Panc1 (cell line): ENCODE measurements at regions of chr9 and their contacts with region 1.

Region 1: DNA sequence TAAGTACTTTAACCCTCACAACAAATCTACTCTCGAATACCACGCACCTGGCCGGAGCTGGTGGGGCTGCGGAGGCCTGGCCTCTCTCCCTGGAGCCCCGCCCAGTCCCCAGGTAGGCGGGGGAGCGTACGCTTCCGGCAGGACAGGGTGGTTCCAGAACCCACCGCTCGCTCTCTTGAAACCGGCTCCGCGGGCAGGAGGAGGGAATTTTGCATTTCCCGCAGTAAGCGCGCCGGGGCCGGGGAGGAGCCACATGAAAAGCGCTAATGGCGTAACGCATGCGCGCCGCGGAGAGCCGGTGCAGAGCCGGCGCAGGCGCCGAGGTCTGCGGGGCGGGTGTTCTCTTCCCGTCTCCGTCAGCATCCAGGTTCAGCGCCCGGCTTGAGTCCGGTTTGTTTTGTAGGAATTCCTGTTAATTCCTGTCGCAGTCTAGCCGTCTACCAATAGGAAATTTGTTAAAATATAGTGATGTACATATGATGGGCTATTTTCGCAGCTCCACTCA is 20.8 kb downstream of the CAVIN4 start:
- DNase-seq: no peak
- ATAC-seq: peak; percentile 83
- H3K4me3 ChIP-seq: peak overlapping the region; percentile 59 to 69
- H3K27ac ChIP-seq: peak overlapping the region; percentile 72; the same call in 1 of the 2 replicates
- H3K4me1 ChIP-seq: no peaks in the 10 kb centered on the region
- H3K27me3 ChIP-seq: no peaks in the 10 kb centered on the region
- CTCF ChIP-seq: no peak

Region 2: GRCh38 chr9:100222674-100223073 is 376.0 kb before region 1 on chr9:
- CTCF ChIA-PET with region 1: no interaction called
- POLR2A ChIA-PET with region 1: no interaction called
- in situ Hi-C with region 1: no loop called
- intact Hi-C with region 1: loop called (anchors 10 kb)
- DNase-seq: no peak
- ATAC-seq: no peak
- H3K4me3 ChIP-seq: no peak overlapping the region
- H3K27ac ChIP-seq: no peak overlapping the region
- H3K4me1 ChIP-seq: no peaks in the 10 kb centered on the region
- H3K27me3 ChIP-seq: no peaks in the 10 kb centered on the region
- CTCF ChIP-seq: peak; percentile 41; the same call in 1 of the 2 replicates

Region 3: GRCh38 chr9:100346836-100347235 is 251.9 kb before region 1 on chr9:
- CTCF ChIA-PET with region 1: no interaction called
- POLR2A ChIA-PET with region 1: no interaction called
- in situ Hi-C with region 1: no loop called
- intact Hi-C with region 1: loop called (anchors 10 kb)
- DNase-seq: no peak
- ATAC-seq: no peak
- H3K4me3 ChIP-seq: no peak overlapping the region
- H3K27ac ChIP-seq: no peak overlapping the region
- H3K4me1 ChIP-seq: peaks cover 17% of the 10 kb centered on the region
- H3K27me3 ChIP-seq: no peaks in the 10 kb centered on the region
- CTCF ChIP-seq: no peak

Region 4: GRCh38 chr9:101235105-101235866 is 636.6 kb after region 1 on chr9:
- CTCF ChIA-PET with region 1: no interaction called
- POLR2A ChIA-PET with region 1: no interaction called
- in situ Hi-C with region 1: no loop called
- intact Hi-C with region 1: loop called (anchors 5 kb)
- DNase-seq: no peak
- ATAC-seq: no peak
- H3K4me3 ChIP-seq: no peak overlapping the region
- H3K27ac ChIP-seq: no peak overlapping the region
- H3K4me1 ChIP-seq: no peaks in the 10 kb centered on the region
- H3K27me3 ChIP-seq: no peaks in the 10 kb centered on the region
- CTCF ChIP-seq: peak; percentile 53; the same call in 1 of the 2 replicates